Left colon (tissue), 2 donors: ENCODE measurements at regions of chr1 and their contacts with region 1.

Region 1: DNA sequence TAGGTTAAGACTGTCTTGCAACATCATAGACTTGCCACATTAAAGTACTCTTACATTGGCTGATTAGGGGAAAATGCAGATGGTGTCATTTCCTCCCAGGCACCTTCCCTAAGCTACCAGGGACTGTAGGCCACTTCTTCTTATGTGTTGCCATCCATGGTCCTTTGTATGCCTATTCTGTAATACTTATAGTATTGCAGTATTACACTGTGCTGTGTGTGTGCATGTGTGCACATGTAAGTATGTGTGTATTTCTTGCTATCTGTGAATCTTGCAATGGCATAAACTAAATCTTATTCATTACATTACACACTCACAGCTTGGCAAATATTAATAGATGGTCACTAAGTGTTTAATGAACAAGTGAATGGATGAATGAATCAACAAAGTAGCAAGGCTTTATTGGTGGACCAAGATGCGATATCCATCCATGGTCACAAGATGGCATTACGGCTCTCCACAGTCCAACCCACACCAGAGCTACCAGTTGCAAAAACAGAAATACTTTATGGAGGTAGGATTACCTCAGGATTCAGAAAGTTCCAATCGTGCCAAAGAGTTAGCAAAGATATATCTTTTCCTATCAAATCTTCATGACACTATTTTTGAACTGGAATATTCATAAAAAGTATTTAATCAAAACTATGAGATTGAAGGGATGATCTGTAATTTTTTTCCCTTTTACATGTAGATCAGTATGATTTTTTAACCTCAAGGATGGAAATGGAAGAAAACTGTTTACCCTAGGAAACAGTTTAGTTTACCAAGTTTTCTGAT is 160.2 kb downstream of the DENND1B start:
- DNase-seq: peak in 1 of 2 donors; percentile 13
- ATAC-seq: peak; percentile 95

Region 2: DNA sequence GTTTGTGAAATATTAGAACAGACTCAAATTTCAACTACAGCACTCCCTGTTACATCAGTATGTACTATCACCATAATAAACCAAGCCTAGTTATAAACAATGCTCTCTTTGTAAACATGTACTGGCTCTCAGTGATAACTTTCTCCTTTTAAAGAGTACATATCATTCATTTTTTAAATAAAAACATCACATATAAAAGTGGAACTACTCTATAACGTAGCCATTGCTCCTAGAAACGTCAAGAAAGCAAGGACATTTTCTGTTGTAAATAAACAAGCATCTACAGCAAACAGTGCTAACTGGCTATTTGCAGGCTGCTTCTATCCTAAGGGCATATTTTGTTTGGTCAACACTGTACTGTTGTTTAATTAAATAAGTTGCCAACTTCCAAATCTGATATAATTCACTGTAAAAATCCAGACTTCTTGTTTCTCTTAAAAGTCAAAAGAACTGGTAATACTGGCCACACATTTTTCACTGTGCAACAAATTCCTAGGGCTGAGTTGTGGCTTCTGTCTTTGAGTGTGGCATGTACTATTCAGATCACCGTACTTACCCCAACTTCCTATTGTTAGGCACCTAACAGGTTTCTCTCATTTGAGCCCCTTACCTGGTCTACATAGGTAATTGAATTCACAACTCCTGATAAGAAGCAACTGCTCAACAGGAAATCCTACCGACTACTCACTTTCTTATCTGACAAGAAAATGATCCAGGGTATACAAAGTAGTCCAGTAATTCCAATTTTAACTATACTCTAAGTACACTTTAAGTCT is 48.3 kb after region 1 on chr1:
- intact Hi-C with region 1: no loop called
- DNase-seq: no peak
- ATAC-seq: peak; percentile 81

Region 3: DNA sequence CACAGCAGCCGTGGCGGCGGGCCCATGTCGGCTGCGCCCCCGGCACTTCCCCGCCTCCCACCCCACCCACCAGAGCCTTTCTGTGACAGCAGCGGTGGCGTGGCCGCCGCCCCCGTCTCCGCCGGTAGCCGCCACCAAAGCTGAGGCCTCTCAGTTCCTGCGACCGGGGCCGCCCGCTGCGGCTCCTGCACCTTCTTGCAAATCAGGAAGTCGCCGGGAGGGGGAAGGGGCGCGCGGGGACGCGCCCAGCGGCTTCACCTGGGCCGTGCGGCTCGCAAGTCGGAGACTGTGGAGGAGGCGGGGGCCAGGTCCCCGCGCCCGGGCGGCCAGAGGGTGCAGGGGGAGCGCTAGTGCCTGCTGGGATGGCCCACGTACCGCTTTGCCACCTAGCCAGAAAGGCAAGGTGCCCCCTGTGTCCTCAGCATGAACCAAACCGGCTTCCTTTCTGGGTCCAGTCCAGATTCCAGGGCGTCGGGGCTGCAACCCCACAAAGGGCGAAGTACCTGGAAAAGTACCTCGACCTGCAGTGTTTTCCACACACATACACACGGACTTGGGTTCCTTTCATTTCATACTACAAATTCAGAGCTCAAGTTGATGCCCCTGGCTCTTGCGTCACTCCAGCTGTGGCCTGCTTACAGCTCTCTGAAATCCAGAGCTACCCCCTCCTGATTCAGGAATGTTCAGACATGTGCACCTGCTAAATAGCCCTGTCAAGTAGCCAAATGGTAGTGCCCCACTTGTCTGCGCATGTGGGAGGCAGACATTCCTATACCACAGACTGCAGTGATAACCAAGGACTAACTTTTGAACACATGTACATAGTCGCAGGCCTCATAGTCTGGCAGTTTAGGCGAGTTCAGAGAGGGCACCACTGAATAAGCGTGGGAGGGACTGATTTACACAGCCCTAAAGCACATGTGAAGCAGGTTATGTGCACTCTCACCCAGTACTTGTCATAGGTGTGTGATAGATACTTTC is 160.5 kb after region 1 on chr1 and contains the start of gene DENND1B:
- intact Hi-C with region 1: no loop called
- DNase-seq: peak; percentile 87 to 92
- ATAC-seq: peak; percentile 79
- total RNA-seq, gene DENND1B: 37.2 to 40.0 TPM

Region 4: DNA sequence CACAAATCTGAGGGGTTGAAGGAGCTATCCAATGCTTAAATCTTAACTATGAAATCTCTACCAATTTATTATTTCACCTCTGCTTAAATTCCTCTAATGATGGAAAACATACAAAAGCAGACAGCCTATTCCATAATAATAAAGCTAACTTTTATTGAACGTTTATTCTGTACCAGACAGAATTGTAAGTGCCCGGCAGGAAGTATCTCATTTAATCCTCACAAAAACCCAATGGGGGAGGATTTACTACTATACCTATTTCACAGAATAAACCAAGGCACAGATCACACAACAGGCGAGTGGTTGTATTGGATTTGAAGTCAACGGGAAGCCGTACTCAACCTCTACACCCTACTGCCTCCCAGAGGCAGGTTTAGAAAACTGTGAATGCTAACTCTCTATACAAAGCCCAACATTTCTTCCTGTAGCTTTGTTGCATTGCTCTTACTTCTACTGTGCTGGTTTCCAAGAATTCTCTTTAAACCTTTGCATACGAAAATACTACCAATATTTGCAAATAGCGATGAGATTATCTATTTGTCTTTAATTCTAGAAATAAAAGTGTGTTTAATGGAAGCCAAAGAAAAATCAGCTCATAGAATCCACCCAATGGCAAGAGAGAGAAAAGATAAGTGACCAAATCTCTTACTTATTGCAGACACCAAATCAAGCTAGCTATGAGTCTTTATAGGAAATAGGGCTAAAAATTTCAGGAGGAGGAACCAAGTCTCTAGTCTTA is 253.8 kb after region 1 on chr1:
- intact Hi-C with region 1: loop called in 1 of 2 experiments (anchors 5 kb)
- DNase-seq: peak in 1 of 2 donors; percentile 20
- ATAC-seq: peak; percentile 100